Dorsolateral prefrontal cortex (tissue), 120 donors: ENCODE measurements at regions of chr15 and their contacts with region 1.

Region 1: GRCh38 chr15:74615508-74616365 is at the start of gene CLK3:
- DNase-seq: peak; percentile 80 to 99 (median 94)
- H3K4me3 ChIP-seq: peak within 1 kb of the TSS; percentile 65 to 100 (median 98)
- H3K27ac ChIP-seq: peak within 1 kb of the TSS; percentile 62 to 99 (median 96)
- H3K27me3 ChIP-seq: no peaks in the 10 kb centered on the region
- CTCF ChIP-seq: peak in 30 of 56 donors; percentile 7 to 56 (median 22)
- total RNA-seq, gene CLK3: 41.9 to 96.5 (median 63.3) TPM

Region 2: DNA sequence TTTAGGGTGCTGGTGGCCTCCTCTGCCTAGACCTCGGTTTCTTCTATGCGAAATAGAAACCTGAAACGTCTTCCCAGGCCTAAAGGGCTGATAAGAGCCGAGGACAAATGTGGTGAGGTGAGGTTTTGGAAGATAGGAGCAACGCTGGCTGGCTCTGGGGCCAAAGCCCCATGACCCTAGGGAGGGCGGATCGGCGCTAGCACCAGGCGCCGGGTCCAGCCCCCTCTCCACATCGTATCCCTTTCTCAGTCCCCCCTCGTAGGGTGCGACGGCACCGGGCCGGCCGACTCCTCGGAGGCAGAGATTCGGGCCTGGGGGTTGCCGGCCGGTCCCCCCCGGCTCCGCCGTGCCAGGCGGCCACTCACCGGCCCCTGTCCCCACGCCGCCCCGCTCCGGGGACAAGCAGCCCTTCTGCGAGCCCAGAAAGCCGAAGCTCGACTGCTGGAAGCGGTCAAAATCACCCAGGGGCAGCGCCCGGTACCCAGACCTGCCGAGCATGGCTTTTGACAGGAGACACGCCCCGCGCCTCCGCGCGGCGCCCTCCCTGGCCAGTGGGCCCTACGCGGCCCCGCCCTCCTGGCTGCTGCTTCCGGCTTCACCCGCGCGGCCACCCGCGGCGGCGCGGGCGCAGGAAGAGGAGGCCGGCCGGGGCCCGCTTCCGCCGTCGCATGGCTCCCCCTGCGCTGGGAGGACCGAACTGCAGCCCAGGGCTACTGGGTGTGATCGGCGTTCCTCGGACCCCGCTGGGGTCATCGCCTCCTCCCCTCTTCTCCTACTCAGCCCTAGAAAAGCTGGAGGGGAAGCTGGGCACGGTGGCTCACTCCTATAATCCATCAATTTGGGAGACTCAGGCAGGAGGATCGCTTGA is 623.8 kb before region 1 on chr15 and contains the start of gene STOML1:
- intact Hi-C with region 1: loop called in 1 of 2 experiments (anchors 5 kb)
- DNase-seq: peak; percentile 74 to 93 (median 86)
- H3K4me3 ChIP-seq: peak within 1 kb of the TSS; percentile 66 to 99 (median 94)
- H3K27ac ChIP-seq: peak within 1 kb of the TSS in 58 of 59 donors; percentile 9 to 94 (median 84)
- H3K27me3 ChIP-seq: no peaks in the 10 kb centered on the region
- CTCF ChIP-seq: peak; percentile 88 to 99 (median 97)
- total RNA-seq, gene STOML1: 37.5 to 82.8 (median 57.6) TPM

Region 3: GRCh38 chr15:74460871-74461846 is 154.6 kb before region 1 on chr15 and contains the start of gene UBL7:
- intact Hi-C with region 1: loop called (anchors 2 to 5 kb)
- DNase-seq: peak; percentile 95 to 99 (median 98)
- H3K4me3 ChIP-seq: peak within 1 kb of the TSS; percentile 42 to 98 (median 83)
- H3K27ac ChIP-seq: peak within 1 kb of the TSS in 58 of 59 donors; percentile 5 to 94 (median 83)
- H3K27me3 ChIP-seq: no peaks in the 10 kb centered on the region
- CTCF ChIP-seq: peak in 55 of 56 donors; percentile 27 to 78 (median 53)
- total RNA-seq, gene UBL7: 46.8 to 107 (median 78.1) TPM

Region 4: DNA sequence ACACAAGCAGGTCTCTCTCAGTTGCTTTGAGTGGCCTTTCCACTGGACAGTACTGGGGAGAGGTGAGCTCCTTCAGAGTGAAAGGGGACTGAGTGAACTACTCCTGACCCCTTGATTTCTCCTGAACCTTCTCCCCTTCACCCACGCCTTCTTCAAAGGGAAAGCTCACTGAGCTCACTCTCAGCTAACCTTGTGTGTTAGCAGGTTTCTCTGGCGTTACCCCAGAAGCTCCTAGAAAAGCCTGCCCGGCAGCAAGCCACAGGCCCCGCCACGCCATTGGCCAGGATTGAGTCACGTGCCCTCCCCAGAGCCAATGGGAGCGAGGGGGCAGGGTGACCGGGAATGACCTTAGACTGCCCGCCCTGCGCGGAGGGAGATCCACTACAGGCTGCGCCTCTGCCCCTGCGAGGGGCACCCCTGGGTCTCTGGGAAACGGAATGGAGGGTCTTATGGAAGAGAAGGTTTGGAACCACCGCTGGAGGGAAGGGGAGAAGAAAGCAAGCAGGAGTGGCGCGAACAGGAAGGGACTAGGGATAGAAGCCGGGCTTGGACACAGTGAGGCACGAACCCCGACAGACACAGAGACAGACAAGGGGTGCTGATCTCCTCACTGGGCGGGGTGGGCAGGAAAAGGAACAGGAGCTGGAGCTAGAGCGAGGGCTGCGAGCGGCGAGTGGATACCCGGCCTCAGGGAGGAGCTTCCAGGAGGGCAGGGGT is 17.5 kb before region 1 on chr15:
- intact Hi-C with region 1: loop called in 1 of 2 experiments (anchors 1 kb)
- DNase-seq: peak; percentile 90 to 97 (median 94)
- H3K4me3 ChIP-seq: peak overlapping the region; percentile 47 to 82 (median 69)
- H3K27ac ChIP-seq: peak overlapping the region in 58 of 59 donors; percentile 20 to 97 (median 85)
- H3K27me3 ChIP-seq: no peaks in the 10 kb centered on the region
- CTCF ChIP-seq: peak in 8 of 56 donors; percentile 9 to 36 (median 14)

Region 5: GRCh38 chr15:74709011-74709410 is 93.3 kb after region 1 on chr15:
- intact Hi-C with region 1: no loop called
- DNase-seq: no peak
- H3K4me3 ChIP-seq: no peak overlapping the region
- H3K27ac ChIP-seq: no peak overlapping the region
- H3K27me3 ChIP-seq: peaks cover 0 to 8% (median 0%) of the 10 kb centered on the region in 45 donors
- CTCF ChIP-seq: no peak